Right ventricle myocardium superior (tissue), 1 donor: ENCODE measurements at regions of chr6 and their contacts with region 1.

Region 1: GRCh38 chr6:15254070-15254841 is 8.4 kb downstream of the JARID2 start:
- DNase-seq: no peak
- ATAC-seq: no peak

Region 2: GRCh38 chr6:14881398-14881797 is 372.9 kb before region 1 on chr6:
- intact Hi-C with region 1: loop called (anchors 10 kb)
- DNase-seq: no peak
- ATAC-seq: peak; percentile 44

Region 3: GRCh38 chr6:15312500-15312899 is 58.2 kb after region 1 on chr6:
- intact Hi-C with region 1: no loop called
- DNase-seq: no peak
- ATAC-seq: no peak

Region 4: GRCh38 chr6:15929685-15930084 is 675.4 kb after region 1 on chr6:
- intact Hi-C with region 1: no loop called
- DNase-seq: no peak
- ATAC-seq: no peak